ENCODE measurements at regions of chr1 and their contacts with region 1.

Region 1: GRCh38 chr1:30106125-30106524 is 617.3 kb downstream of the MATN1 start:
- DNase-seq: peak; percentile 65 to 81 (median 75)
- ATAC-seq: peak; percentile 97
- H3K4me3 ChIP-seq: no peak overlapping the region
- H3K27ac ChIP-seq: no peak overlapping the region
- H3K4me1 ChIP-seq: no peaks in the 10 kb centered on the region; a peak in 1 of 5 replicates
- H3K27me3 ChIP-seq: peaks cover 13 to 38% of the 10 kb centered on the region in 2 experiments
- CTCF ChIP-seq: peak; percentile 71 to 84 (median 79)
- EP300 ChIP-seq: no peak
- POLR2A ChIP-seq: no peak
- RAD21 ChIP-seq: peak in 1 of 2 experiments; percentile 65; a peak in 3 of 4 replicates

Region 2: DNA sequence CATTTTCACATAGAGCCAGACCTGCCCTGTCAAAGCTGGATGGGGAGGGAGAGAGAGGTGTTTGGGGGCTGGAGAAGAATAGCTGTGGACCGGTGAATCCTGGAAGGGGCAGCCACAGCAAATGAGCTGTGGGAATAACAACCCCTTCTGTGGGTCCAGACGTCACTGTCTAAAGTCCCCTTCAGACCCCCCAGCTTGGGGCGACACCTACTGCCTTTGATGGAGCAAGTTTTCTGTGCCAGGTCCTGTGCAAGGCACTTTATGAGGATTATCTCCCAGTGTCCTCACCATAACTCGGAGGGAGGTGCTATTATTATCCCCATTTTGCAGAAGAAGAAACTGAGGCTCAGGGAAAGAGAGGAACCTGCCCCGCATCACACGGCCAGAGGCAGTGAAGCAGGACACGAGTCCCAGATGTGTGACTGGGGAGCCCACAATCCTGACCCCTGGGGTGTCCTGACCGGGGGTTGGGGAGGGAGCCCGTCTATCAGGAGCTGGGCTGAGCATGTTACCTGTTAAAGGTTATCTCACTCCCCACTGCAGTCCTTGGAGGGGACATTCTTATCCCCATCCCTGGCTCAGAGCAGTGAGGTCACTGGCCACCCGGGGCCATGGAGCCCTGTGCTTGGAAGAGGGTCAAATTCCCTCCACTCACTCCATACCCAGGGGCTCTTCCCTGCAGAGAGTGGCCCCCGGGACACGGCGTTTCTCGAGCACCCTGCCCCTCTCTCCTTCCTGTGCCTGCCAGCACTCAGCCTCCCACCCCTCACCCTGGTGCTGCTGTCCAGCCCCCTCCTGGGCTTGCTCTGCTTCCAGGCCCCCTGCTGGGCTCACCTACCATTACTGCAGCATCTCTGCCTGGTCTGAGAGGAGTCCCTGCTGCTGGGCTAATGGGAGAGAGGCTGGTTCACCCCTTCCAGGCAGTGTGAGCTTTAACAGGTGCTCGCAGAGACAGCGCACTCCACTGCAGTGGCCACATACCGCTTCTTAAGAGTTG is 736.9 kb before region 1 on chr1:
- CTCF ChIA-PET with region 1: no interaction called
- POLR2A ChIA-PET with region 1: no interaction called
- in situ Hi-C with region 1: no loop called
- intact Hi-C with region 1: loop called (anchors 10 kb)
- DNase-seq: no peak
- ATAC-seq: peak; percentile 58
- H3K4me3 ChIP-seq: no peak overlapping the region
- H3K27ac ChIP-seq: no peak overlapping the region
- H3K4me1 ChIP-seq: no peaks in the 10 kb centered on the region
- H3K27me3 ChIP-seq: peaks cover 2 to 31% of the 10 kb centered on the region in 2 experiments; a peak in 4 of 5 replicates
- CTCF ChIP-seq: no peak
- EP300 ChIP-seq: no peak
- POLR2A ChIP-seq: no peak
- RAD21 ChIP-seq: no peak